ENCODE measurements at regions of chr9 and their contacts with region 1.

Region 1: GRCh38 chr9:122904823-122905710 is at the start of gene RC3H2:
- DNase-seq: peak; percentile 98
- H3K4me3 Mint-ChIP-seq: peak within 1 kb of the TSS; percentile 92
- H3K27ac Mint-ChIP-seq: peak within 1 kb of the TSS; percentile 91
- H3K4me1 Mint-ChIP-seq: peaks cover 26% of the 10 kb centered on the region
- H3K27me3 Mint-ChIP-seq: no peaks in the 10 kb centered on the region
- total RNA-seq, gene RC3H2: 51.4 to 55.1 TPM

Region 2: DNA sequence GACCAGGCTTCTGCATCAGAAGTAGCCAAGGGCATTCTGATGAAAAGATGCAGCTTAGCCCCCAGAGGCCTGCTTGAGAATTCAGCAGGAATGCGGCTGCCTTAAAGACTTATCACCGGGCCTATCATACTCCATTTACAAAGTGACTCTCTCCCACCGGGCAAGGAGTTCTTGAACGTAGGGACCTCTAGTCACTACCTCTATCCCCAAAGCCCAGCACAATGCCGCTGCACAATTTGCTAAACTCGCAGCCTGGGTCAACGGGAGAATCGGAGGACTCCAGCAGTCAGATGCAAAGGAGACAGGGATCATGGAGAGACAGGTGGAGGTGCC is 77.3 kb before region 1 on chr9:
- CTCF ChIA-PET with region 1: interaction called, 3 read pairs
- POLR2A ChIA-PET with region 1: interaction called, 18 read pairs
- DNase-seq: no peak
- H3K4me3 Mint-ChIP-seq: peak overlapping the region; percentile 91
- H3K27ac Mint-ChIP-seq: peak overlapping the region; percentile 86
- H3K4me1 Mint-ChIP-seq: peaks cover 30% of the 10 kb centered on the region
- H3K27me3 Mint-ChIP-seq: no peaks in the 10 kb centered on the region

Region 3: DNA sequence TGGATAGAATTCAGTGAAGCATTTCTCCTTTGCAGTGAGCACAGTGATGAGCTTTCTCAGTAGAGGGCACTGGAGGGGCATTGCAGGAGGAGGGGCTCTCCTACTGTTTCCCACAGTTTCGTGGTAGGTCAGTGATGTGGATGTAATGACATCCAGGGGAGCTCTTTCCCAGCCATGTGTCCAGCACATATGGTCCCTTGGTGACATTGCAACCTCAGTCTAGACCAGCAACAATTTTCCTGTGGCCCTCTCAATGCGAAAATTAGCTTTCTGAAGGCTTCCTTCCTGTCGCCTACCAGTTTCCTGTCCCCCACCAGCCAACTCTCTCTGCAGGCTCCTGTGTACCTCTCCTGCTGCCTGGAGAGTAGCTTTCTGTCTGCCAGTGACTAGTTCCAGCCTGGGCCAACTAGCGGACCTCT is 69.7 kb before region 1 on chr9:
- CTCF ChIA-PET with region 1: no interaction called
- POLR2A ChIA-PET with region 1: interaction called, 13 read pairs
- DNase-seq: peak; percentile 32
- H3K4me3 Mint-ChIP-seq: no peak overlapping the region
- H3K27ac Mint-ChIP-seq: peak overlapping the region; percentile 61
- H3K4me1 Mint-ChIP-seq: peaks cover 13% of the 10 kb centered on the region
- H3K27me3 Mint-ChIP-seq: no peaks in the 10 kb centered on the region

Region 4: GRCh38 chr9:122931226-122932121 is 26.4 kb after region 1 on chr9 and contains the start of gene ZBTB26:
- CTCF ChIA-PET with region 1: interaction called, 6 read pairs
- POLR2A ChIA-PET with region 1: interaction called, 48 read pairs
- DNase-seq: peak; percentile 90
- H3K4me3 Mint-ChIP-seq: no peak within 1 kb of the TSS
- H3K27ac Mint-ChIP-seq: peak within 1 kb of the TSS; percentile 79
- H3K4me1 Mint-ChIP-seq: peaks cover 13% of the 10 kb centered on the region
- H3K27me3 Mint-ChIP-seq: no peaks in the 10 kb centered on the region
- total RNA-seq, gene ZBTB26: 8.4 to 8.5 TPM

Region 5: GRCh38 chr9:122940603-122941559 is 35.8 kb after region 1 on chr9 and contains the start of gene RABGAP1:
- CTCF ChIA-PET with region 1: interaction called, 6 read pairs
- POLR2A ChIA-PET with region 1: interaction called, 59 read pairs
- DNase-seq: peak; percentile 99
- H3K4me3 Mint-ChIP-seq: peak within 1 kb of the TSS; percentile 92
- H3K27ac Mint-ChIP-seq: peak within 1 kb of the TSS; percentile 78
- H3K4me1 Mint-ChIP-seq: peaks cover 40% of the 10 kb centered on the region
- H3K27me3 Mint-ChIP-seq: no peaks in the 10 kb centered on the region
- total RNA-seq, gene RABGAP1: 26.5 to 32.3 TPM

Region 6: DNA sequence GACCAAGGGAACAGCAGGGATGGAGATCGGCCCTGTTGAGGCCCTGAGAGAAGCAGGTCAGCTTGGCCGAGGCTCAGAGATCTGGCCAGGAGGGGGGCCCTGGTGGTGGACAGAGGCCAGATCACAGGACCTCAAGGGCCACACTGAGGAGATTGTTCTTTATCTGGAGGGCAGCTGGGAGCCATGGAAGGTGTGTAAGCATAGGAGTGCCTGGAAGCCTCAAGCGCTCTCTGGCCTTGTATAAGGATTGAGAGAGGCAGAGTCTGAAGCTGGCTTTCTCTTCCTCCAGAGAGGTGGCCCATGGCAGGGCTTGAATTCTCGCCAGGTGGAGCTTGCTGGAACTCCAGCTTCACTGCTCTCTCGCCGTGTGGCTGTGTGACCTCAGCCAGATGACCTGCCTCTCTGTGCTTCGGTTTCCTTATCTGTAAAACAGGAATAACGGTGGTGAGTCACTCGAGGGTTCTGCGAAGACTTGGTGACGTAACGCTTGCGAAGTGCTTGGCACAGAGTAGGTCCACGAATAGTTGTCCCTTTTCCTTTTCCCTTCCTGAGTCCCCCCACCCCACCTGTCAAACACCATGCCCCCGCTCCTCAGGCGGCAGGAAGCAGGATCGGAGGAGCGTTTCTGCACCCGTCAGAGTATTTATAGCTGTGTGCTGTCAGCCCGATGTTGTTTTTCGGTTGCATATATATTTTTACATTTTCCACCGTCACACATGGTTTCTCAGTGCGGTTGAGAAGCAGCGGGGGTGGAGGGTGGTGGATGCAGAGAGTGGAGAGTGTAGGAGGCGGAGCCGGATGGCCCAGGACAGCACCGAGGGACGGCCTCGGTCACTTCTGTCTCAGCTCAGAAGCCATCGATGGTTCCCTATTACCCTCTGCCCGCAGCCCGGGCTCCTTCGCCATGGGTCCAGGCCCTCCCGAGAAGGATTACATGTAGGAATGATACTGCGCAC is 433.9 kb after region 1 on chr9:
- CTCF ChIA-PET with region 1: no interaction called
- POLR2A ChIA-PET with region 1: interaction called, 12 read pairs
- DNase-seq: peak; percentile 80
- H3K4me3 Mint-ChIP-seq: peak overlapping the region; percentile 77
- H3K27ac Mint-ChIP-seq: peak overlapping the region; percentile 97
- H3K4me1 Mint-ChIP-seq: peaks cover 36% of the 10 kb centered on the region
- H3K27me3 Mint-ChIP-seq: no peaks in the 10 kb centered on the region